WTC11 (cell line): ENCODE measurements at regions of chr3 and their contacts with region 1.

Region 1: DNA sequence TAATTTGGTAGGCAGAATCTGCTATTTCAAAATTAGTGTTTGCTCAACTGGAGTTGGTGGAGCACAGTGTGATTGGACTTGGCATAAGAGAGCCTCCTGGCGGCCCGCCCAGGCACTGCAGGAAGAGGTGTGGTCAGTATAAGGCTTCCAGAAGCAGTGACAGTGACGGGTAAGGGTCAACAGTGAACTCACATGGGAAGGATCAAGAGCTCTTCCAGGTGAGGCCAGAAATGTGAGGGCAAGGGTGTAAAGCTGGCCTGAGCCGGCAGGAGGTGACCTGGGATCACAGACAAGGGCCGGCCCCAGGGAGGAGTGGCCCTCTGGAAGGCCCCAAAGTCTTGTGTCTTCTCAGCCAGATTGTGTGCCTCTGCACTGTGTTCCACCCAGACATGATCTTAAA is 93.2 kb upstream of the RNF7 start:
- DNase-seq: peak; percentile 92
- ATAC-seq: peak; percentile 88
- H3K4me3 Mint-ChIP-seq: no peak overlapping the region
- H3K27ac Mint-ChIP-seq: no peak overlapping the region; the same call in 1 of the 2 replicates
- H3K4me1 Mint-ChIP-seq: peaks cover 14% of the 10 kb centered on the region
- H3K27me3 Mint-ChIP-seq: no peaks in the 10 kb centered on the region
- CTCF ChIP-seq: peak; percentile 84

Region 2: DNA sequence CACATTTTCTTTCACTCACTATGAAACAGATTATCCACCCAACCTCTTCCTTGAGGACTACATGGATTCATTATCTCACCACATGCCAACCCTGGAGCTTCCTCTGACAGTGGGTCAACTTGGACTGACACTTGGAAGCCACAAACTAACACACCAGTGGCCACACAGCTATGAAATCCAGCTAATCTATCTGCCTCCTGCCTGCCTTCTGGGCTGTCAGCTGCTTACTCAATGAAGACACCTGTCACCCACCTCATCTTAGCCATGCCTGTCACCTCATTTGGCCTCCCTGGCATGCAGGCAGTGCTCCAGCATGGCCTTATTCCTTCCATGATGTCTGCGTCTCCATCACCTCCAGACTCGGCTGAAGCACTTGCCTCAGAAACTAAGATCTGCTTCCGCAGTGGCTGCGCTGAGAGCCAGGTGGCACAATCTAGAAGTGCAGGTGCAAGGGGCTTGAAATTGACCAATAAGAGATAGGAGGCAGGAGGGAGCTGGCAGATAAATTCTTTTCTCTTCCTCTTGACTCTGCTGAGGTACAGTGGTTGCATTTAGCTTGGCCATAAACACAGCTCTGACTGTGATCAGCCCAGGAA is 12.1 kb before region 1 on chr3:
- CTCF ChIA-PET with region 1: interaction called, 22 read pairs
- POLR2A ChIA-PET with region 1: no interaction called
- DNase-seq: no peak
- ATAC-seq: peak; percentile 98
- H3K4me3 Mint-ChIP-seq: no peak overlapping the region
- H3K27ac Mint-ChIP-seq: no peak overlapping the region
- H3K4me1 Mint-ChIP-seq: peaks cover 4% of the 10 kb centered on the region
- H3K27me3 Mint-ChIP-seq: no peaks in the 10 kb centered on the region
- CTCF ChIP-seq: no peak

Region 3: DNA sequence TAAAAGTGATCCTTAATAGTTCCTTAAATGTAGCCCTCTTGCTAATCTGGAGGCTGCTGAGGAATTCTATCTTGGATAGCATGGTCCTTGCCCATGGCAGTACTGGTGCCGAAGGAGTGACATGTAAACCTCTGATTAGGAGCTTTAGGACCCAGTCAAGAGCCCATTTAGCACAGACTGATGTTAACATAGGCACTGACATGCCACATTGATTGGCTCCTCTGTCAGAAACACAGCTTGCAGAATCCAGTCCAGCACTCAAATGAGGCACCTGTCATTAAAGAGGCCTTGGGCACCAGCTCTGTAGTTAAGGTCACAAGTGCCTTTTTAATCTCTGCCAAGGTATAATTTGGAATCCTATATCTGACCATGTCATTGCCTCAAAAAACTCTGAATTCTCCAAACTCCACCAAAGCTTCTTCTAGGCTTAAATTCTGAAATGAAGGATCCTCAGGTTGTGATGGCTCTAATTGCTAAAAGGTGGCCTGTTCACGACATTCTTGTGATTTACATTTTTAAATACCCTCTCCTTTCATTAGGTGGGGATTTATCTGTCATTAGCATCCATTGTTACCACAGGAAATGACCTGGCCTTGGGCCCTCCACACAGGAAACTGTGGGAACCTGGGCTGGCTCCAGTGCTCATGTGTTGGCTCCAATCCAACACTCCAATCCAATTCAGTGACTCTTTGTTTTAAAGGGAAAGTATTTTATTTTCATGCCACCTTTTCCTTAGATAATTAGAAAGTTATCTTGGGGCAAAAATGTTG is 35.9 kb after region 1 on chr3:
- CTCF ChIA-PET with region 1: interaction called, 12 read pairs
- POLR2A ChIA-PET with region 1: interaction called, 7 read pairs
- DNase-seq: peak; percentile 29
- ATAC-seq: peak; percentile 77
- H3K4me3 Mint-ChIP-seq: peak overlapping the region; percentile 20; the same call in 1 of the 2 replicates
- H3K27ac Mint-ChIP-seq: peak overlapping the region; percentile 88
- H3K4me1 Mint-ChIP-seq: peaks cover 53% of the 10 kb centered on the region
- H3K27me3 Mint-ChIP-seq: no peaks in the 10 kb centered on the region
- CTCF ChIP-seq: no peak

Region 4: DNA sequence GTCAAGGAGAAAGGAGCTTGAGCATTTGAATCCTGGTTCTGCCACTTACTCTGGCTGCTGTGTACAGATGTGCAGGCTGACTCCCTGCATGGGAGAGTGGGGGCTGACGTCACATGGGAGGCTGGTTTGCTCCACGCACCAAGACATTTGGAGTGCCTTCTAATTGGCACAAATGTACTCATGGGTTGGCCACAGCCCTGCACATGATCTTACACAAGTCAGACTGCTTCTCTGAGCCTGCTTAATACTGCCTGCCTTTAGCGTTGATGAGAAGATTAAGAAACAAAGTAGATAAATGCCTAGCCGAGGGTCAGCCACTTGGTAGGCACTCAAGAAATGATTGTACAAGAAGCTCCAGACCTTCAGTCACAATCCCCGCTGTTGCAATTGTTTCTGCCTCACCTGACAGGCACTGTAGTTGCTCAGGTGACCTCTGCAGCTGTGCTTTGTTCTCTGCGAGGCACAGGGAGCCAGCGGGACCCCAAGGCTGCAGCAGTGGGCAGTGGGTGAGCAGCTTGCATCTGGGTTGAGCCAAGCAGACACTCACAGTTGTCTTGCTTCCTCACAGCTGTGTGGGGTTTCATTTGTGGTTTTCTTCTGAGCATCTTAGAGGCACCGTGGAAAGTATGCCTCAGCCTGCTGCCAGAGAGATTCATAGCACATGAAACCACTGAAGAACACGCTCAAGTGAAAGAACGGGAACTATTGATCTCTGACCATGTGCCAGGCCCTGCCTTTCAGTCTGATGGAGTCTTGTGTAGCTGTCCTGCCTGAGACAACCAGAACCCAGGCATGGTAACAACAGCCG is 151.4 kb after region 1 on chr3:
- CTCF ChIA-PET with region 1: interaction called, 14 read pairs
- POLR2A ChIA-PET with region 1: no interaction called
- DNase-seq: no peak
- ATAC-seq: no peak
- H3K4me3 Mint-ChIP-seq: no peak overlapping the region; the same call in 1 of the 2 replicates
- H3K27ac Mint-ChIP-seq: peak overlapping the region; percentile 14; the same call in 1 of the 2 replicates
- H3K4me1 Mint-ChIP-seq: peaks cover 29% of the 10 kb centered on the region
- H3K27me3 Mint-ChIP-seq: peaks cover 33% of the 10 kb centered on the region
- CTCF ChIP-seq: no peak